HCT116 (cell line): ENCODE measurements at regions of chr17 and their contacts with region 1.

Region 1: DNA sequence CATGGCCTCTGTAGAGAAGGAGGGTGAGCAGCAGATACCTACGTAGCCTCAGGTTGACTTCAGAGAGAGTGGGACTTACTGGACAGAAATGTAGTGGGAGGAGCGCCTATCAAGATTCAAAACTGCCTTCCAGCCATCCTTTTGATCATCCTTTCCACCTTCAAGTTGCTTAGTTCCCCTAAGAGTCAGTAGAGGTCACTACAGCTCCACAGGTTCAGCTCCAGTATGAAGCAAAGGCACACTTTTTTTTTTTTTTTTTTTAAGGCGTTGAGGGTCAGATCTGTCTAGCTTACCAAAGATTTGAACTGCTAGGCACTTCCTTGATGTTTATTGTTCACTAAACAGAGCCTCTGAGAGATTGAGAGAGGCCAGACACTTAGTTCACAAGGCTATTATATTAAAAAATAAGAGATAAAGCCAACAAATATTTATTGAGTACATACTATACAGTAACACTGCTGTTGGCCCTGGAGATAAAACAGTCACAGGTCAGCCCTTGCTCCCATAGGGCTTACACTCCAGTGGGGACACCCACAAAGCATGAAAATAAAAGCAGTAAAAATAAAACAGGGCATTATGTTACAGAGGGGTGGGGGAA is 3.1 kb downstream of the RNF227 start:
- DNase-seq: peak; percentile 81
- ATAC-seq: peak; percentile 83
- H3K4me3 ChIP-seq: no peak overlapping the region
- H3K27ac ChIP-seq: no peak overlapping the region
- H3K4me1 ChIP-seq: peaks cover 10 to 28% of the 10 kb centered on the region in 2 experiments; a peak in 3 of 4 replicates
- H3K27me3 ChIP-seq: no peaks in the 10 kb centered on the region
- CTCF ChIP-seq: peak; percentile 80 to 91 (median 86)
- POLR2A ChIP-seq: no peak
- RAD21 ChIP-seq: peak; percentile 92

Region 2: GRCh38 chr17:7825206-7825990 is 87.6 kb before region 1 on chr17:
- CTCF ChIA-PET with region 1: no interaction called
- POLR2A ChIA-PET with region 1: no interaction called
- RAD21 ChIA-PET with region 1: no interaction called
- intact Hi-C with region 1: loop called (anchors 5 kb)
- DNase-seq: no peak
- ATAC-seq: peak; percentile 72
- H3K4me3 ChIP-seq: no peak overlapping the region
- H3K27ac ChIP-seq: no peak overlapping the region
- H3K4me1 ChIP-seq: peaks cover 0 to 15% of the 10 kb centered on the region in 2 experiments; a peak in 2 of 4 replicates
- H3K27me3 ChIP-seq: no peaks in the 10 kb centered on the region
- CTCF ChIP-seq: peak in 2 of 3 experiments; percentile 36 to 43; a peak in 4 of 6 replicates
- POLR2A ChIP-seq: no peak
- RAD21 ChIP-seq: peak; percentile 27; the same call in 1 of the 2 replicates

Region 3: GRCh38 chr17:7982666-7983065 is 69.6 kb after region 1 on chr17:
- CTCF ChIA-PET with region 1: interaction called, 12 read pairs
- POLR2A ChIA-PET with region 1: no interaction called
- RAD21 ChIA-PET with region 1: no interaction called
- intact Hi-C with region 1: no loop called
- DNase-seq: no peak
- ATAC-seq: peak; percentile 40
- H3K4me3 ChIP-seq: no peak overlapping the region
- H3K27ac ChIP-seq: no peak overlapping the region
- H3K4me1 ChIP-seq: no peaks in the 10 kb centered on the region
- H3K27me3 ChIP-seq: no peaks in the 10 kb centered on the region
- CTCF ChIP-seq: peak in 1 of 3 experiments; percentile 33; a peak in 1 of 6 replicates
- POLR2A ChIP-seq: no peak
- RAD21 ChIP-seq: peak; percentile 59

Region 4: DNA sequence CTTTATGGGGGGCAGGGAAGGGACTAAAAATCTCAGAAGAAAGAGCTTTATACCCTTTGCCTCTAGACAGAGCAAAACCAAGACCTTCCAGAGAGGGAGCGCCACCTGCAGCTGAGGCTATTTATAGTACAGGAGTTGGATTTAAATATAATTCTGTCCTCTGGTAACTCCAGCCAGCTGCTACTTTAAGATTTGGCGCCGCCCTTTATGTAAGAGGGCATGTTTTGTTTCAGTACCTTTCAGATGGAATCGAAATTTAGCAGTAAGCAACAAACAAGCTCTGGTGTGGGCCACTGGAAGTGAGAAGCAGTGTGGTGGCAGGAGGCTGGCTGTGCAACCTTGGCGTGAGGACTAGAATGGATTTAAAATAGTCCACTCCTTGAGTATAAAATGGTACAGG is 84.2 kb after region 1 on chr17:
- CTCF ChIA-PET with region 1: interaction called, 11 read pairs
- POLR2A ChIA-PET with region 1: interaction called, 3 read pairs
- RAD21 ChIA-PET with region 1: no interaction called
- intact Hi-C with region 1: no loop called
- DNase-seq: peak; percentile 67
- ATAC-seq: peak; percentile 97
- H3K4me3 ChIP-seq: peak overlapping the region in 1 of 2 experiments; percentile 27; a peak in 1 of 4 replicates
- H3K27ac ChIP-seq: peak overlapping the region; percentile 49
- H3K4me1 ChIP-seq: peaks cover 13 to 22% of the 10 kb centered on the region in 2 experiments
- H3K27me3 ChIP-seq: no peaks in the 10 kb centered on the region
- CTCF ChIP-seq: peak; percentile 61 to 87 (median 66)
- POLR2A ChIP-seq: no peak
- RAD21 ChIP-seq: peak; percentile 62

Region 5: GRCh38 chr17:8029135-8029534 is 116.1 kb after region 1 on chr17:
- CTCF ChIA-PET with region 1: no interaction called
- POLR2A ChIA-PET with region 1: no interaction called
- RAD21 ChIA-PET with region 1: no interaction called
- intact Hi-C with region 1: no loop called
- DNase-seq: no peak
- ATAC-seq: no peak
- H3K4me3 ChIP-seq: no peak overlapping the region
- H3K27ac ChIP-seq: no peak overlapping the region
- H3K4me1 ChIP-seq: no peaks in the 10 kb centered on the region
- H3K27me3 ChIP-seq: no peaks in the 10 kb centered on the region; the same call in 1 of the 2 replicates
- CTCF ChIP-seq: no peak
- POLR2A ChIP-seq: no peak
- RAD21 ChIP-seq: no peak